GM23248 (cell line): ENCODE measurements at regions of chr11 and their contacts with region 1.

Region 1: DNA sequence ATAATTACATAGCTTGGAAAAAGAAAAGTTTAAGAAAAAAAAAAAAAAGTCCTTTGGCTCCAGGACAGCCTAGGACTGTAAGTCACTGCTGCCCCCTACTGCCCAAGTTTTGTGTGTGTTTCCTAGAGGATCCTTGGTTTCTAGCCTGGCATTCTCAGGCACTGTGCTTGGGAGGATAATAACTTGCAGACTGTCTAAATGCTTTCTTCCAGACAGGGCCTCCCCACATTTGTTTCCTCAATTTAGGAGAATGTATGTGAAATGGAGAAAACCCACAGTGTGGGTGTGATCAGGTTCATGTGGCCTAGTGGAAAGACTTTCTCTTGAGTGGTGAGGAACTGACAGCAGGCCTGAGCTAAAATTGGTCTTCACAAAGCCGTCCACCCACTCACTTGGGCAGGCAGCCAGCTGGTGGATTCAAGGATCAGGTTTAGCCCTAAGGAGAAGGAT is 191.0 kb downstream of the NAV2 start:
- DNase-seq: peak; percentile 84
- H3K4me3 ChIP-seq: no peak overlapping the region
- H3K27ac ChIP-seq: no peak overlapping the region
- H3K4me1 ChIP-seq: 0 out of 2 replicates have a peak, but pooled peaks cover 3% of the 10 kb centered on the region
- H3K27me3 ChIP-seq: no peaks in the 10 kb centered on the region

Region 2: DNA sequence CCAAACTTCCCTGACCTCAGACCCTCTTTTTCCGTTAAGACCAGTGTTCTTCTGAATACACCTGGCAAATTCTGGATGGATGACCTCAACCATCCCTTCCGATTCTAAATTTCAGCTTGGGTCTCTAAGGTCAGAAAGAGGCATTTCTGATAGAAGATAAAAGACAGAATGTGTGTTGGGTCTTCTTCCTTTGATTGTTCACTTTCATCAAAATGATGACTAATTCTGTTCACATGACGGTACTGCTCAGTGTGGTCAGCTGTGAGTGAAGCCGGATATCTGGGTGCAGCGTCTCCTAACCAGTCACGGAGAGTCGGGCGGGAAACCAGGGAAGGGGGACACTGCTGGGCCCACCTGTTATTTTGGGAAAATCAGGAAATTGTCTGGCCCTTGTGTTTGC is 342.6 kb before region 1 on chr11:
- in situ Hi-C with region 1: loop called (anchors 5 kb)
- DNase-seq: no peak
- H3K4me3 ChIP-seq: no peak overlapping the region
- H3K27ac ChIP-seq: no peak overlapping the region
- H3K4me1 ChIP-seq: peaks cover 7% of the 10 kb centered on the region; the same call in 1 of the 2 replicates
- H3K27me3 ChIP-seq: no peaks in the 10 kb centered on the region

Region 3: DNA sequence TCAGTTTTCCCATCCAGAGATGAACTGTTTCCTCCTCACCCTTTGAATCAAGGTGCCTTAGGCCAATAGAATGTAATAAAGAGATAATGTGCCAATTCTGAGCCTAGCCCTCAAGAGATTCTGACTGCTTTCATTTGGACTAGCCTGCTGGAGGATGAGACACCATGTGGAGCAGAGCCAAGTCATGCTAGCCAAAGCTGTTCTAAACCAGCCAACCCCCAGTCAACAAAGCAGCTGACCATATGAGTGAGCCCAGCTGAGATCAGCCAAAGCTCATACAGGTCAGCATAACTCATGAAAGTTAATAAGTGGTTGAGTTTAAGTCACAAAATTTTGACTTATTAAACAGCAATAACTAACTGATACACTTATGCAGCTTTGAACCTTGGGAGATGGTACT is 323.3 kb after region 1 on chr11:
- in situ Hi-C with region 1: no loop called
- DNase-seq: peak; percentile 14
- H3K4me3 ChIP-seq: no peak overlapping the region
- H3K27ac ChIP-seq: no peak overlapping the region
- H3K4me1 ChIP-seq: no peaks in the 10 kb centered on the region
- H3K27me3 ChIP-seq: no peaks in the 10 kb centered on the region; the same call in 1 of the 2 replicates